ENCODE measurements at regions of chr1 and their contacts with region 1.

Region 1: DNA sequence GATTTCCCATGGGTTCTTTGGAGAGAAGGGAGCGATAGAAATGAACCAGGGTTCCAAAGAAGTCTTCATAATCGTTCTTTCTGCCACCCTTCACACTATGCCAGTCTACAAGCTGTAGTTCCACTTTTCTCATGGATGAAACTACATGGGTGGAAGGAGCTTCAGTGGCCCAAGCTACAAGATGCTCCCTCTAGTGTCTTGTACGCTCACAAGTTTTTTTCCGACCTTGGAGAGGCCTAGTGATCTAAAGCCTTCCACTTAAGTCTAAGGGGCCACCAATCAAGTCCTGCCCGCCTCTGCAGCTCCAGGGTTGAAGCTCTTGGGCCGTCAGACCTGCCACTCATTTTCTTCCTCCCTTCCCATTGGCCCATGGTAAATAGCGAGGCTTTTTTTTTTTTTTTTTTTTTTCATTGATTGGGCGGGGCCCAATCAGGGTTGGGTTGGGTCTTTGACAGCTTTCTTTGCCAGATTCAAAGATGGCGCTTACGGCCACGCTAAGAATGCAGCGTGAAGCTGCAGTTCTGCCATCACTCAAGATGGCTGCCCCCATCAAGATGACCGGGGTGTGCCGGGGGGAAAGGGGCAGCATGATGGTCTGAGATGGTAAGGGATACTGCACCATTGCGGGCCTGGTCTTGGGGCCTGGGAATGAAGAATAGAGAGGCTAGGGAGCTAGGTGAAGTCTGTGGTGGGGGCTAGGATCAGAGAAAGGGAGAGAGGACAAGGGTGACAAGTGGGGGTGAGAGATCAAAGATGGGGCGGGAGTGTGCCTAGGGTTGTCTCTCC is at the start of gene TOMM40L:
- DNase-seq: peak; percentile 90 to 97
- ATAC-seq: peak; percentile 92
- total RNA-seq, gene TOMM40L: 19.6 to 24.6 TPM

Region 2: GRCh38 chr1:161292631-161293030 is 66.9 kb after region 1 on chr1:
- intact Hi-C with region 1: loop called in 1 of 2 experiments (anchors 5 kb)
- DNase-seq: no peak
- ATAC-seq: no peak

Region 3: GRCh38 chr1:161382214-161383019 is 156.7 kb after region 1 on chr1:
- intact Hi-C with region 1: loop called (anchors 5 to 10 kb)
- DNase-seq: no peak
- ATAC-seq: peak; percentile 93

Region 4: DNA sequence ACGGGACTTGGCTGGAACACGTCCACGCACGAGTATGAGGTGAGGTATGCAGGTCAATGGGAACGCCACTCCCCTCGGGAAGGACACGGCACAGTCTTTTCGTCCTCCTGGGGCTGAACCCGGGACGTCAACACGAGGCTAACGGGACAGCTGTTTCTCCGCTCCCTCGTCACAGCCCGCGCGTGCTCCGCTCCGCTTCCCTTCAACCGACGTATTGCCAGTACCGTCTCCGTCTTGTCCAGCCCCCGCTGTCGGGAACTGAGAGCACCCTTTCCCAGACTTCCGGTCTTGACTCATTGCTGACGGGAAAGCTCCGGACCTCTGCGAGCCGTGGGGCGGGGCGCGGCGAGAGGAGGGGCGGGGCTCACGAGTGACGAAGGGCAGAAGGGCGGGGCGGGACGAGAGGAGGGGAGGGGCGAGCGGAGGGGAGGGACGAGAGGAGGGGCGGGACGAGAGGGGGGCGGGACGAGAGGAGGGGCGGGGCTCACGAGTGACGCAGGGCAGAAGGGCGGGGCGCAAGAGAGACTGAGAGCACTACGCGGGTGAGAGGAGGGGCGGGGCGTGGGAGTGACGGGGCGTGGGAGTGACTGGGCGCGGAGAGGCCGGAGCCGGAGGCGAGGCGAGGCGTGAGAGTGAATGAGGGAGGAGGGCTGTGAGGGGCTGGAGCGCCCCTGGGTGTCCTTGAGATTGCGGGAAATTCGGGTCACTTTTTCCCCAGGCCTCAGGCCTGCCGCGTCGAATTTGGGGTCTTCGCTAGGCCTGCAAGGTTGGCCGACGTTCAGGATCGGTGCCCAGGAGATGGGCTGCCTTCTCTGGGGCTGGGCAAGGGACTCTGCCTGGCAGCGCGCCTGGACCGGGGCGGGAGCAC is 164.2 kb after region 1 on chr1:
- intact Hi-C with region 1: loop called in 1 of 2 experiments (anchors 10 kb)
- DNase-seq: peak; percentile 97 to 99
- ATAC-seq: peak; percentile 92